ENCODE measurements at regions of chr2 and their contacts with region 1.

Region 1: DNA sequence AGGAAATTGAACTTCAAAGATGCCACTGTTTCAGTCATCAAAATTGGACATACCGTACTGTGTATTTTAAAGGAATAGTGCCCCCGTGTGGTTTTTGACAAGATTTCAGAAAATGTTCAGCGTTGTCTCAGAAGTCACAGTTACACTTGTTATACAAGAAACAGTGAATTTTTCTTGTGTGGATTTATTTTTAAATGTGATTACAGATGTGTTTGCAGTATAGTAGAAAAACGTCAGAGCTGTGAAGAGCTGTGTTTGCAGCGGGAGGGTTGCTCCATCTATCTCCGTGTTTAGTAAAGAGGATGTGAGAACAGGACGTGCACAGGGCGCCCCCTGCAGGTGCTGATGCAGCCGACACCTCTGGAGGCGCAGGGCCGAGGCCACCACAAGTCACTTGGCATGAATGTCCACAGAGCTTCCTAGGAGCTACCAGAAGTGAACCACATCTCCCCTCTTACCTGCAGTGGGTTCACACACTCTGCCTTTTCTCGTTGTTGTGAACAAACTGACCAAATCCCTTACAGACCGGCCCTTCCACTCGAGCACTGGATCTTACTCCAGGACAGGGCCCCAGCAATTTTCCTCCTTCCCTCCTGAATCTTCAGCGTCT is 73.1 kb downstream of the CACNB4 start:
- DNase-seq: peak; percentile 86
- H3K4me3 Mint-ChIP-seq: peak overlapping the region; percentile 65
- H3K27ac Mint-ChIP-seq: no peak overlapping the region
- H3K4me1 Mint-ChIP-seq: peaks cover 2% of the 10 kb centered on the region
- H3K27me3 Mint-ChIP-seq: peaks cover 8% of the 10 kb centered on the region

Region 2: GRCh38 chr2:151481744-151482143 is 544.0 kb before region 1 on chr2:
- CTCF ChIA-PET with region 1: no interaction called
- POLR2A ChIA-PET with region 1: no interaction called
- intact Hi-C with region 1: loop called (anchors 10 kb)
- DNase-seq: peak; percentile 54
- H3K4me3 Mint-ChIP-seq: no peak overlapping the region
- H3K27ac Mint-ChIP-seq: peak overlapping the region; percentile 61
- H3K4me1 Mint-ChIP-seq: peaks cover 32% of the 10 kb centered on the region
- H3K27me3 Mint-ChIP-seq: no peaks in the 10 kb centered on the region

Region 3: GRCh38 chr2:151999053-151999452 is 26.7 kb before region 1 on chr2:
- CTCF ChIA-PET with region 1: interaction called, 73 read pairs
- POLR2A ChIA-PET with region 1: no interaction called
- intact Hi-C with region 1: loop called (anchors 1 kb)
- DNase-seq: peak; percentile 57
- H3K4me3 Mint-ChIP-seq: no peak overlapping the region
- H3K27ac Mint-ChIP-seq: no peak overlapping the region
- H3K4me1 Mint-ChIP-seq: peaks cover under 1% of the 10 kb centered on the region
- H3K27me3 Mint-ChIP-seq: peaks cover 2% of the 10 kb centered on the region

Region 4: DNA sequence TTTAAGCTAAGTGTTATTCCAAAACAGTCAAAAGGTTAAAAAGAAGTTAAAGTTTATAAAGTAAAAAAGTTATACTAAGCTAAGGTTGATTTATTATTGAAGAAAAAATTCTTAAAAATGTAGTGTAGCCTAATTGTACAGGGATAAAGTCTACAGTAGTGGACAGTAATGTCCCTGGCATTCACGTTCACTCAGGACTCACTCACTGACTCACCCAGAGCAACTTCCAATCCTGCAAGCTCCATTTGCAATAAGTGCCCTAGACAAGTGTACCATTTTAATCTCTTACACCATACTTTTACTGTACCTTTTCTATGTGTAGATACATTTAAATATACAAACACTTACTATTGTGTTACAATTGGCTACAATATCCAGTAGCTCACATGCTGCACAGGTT is 13.1 kb before region 1 on chr2:
- CTCF ChIA-PET with region 1: interaction called, 41 read pairs
- POLR2A ChIA-PET with region 1: no interaction called
- intact Hi-C with region 1: no loop called
- DNase-seq: no peak
- H3K4me3 Mint-ChIP-seq: no peak overlapping the region
- H3K27ac Mint-ChIP-seq: no peak overlapping the region
- H3K4me1 Mint-ChIP-seq: no peaks in the 10 kb centered on the region
- H3K27me3 Mint-ChIP-seq: peaks cover 9% of the 10 kb centered on the region

Region 5: GRCh38 chr2:152036611-152037469 is 11.1 kb after region 1 on chr2:
- CTCF ChIA-PET with region 1: interaction called, 39 read pairs
- POLR2A ChIA-PET with region 1: no interaction called
- intact Hi-C with region 1: no loop called
- DNase-seq: peak; percentile 69
- H3K4me3 Mint-ChIP-seq: no peak overlapping the region
- H3K27ac Mint-ChIP-seq: no peak overlapping the region
- H3K4me1 Mint-ChIP-seq: no peaks in the 10 kb centered on the region
- H3K27me3 Mint-ChIP-seq: no peaks in the 10 kb centered on the region

Region 6: GRCh38 chr2:152047819-152048471 is 22.2 kb after region 1 on chr2:
- CTCF ChIA-PET with region 1: interaction called, 10 read pairs
- POLR2A ChIA-PET with region 1: no interaction called
- intact Hi-C with region 1: no loop called
- DNase-seq: no peak
- H3K4me3 Mint-ChIP-seq: no peak overlapping the region
- H3K27ac Mint-ChIP-seq: no peak overlapping the region
- H3K4me1 Mint-ChIP-seq: no peaks in the 10 kb centered on the region
- H3K27me3 Mint-ChIP-seq: no peaks in the 10 kb centered on the region

Measured in activated CD4-positive, alpha-beta memory T cell treated with anti-CD3 and anti-CD28 coated beads for 36 hours (primary cell).